Sigmoid colon (tissue), 7 donors: ENCODE measurements at regions of chrX and their contacts with region 1.

Region 1: DNA sequence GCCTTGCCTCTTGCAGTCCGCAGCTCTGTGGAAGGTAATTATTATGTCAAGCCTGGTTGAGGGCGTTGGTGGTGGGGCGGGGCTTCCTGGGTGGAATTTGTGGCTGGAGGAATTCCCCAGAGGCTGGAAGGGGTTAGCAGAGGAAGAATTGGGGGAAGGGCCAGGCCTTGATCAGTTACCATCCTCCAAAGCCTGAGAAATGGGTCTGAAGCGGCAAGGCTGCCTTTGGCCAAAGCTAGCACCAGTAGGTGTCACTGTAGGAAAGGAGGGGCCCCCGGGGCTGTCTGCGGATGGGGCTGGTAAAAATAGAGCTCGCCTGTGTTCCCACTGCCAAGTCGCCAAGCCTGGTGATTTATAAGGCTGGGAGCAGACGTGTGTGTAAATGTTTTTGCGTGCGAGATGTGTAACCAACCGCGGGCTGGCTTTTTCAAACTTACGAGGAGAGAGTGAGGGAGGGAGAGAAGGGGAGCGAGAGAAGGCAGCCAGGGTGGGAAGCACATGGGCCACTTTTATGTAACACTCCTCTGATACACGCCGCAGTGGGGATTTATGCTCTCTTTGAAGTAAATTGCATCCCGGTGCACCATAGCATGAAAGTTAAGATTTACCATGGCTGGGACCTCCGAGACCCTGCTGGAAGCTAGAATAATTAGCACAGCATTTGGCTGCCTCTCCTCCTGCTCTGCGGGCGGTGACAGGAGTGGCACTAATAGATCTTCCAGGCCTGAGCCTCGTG is 366.9 kb downstream of the BCOR start:
- DNase-seq: peak; percentile 94
- H3K4me3 ChIP-seq: no peak overlapping the region
- H3K27ac ChIP-seq: peak overlapping the region in 3 of 4 donors; percentile 63 to 67 (median 65)
- H3K4me1 ChIP-seq: peaks cover 0 to 37% (median 18%) of the 10 kb centered on the region in 4 donors
- H3K27me3 ChIP-seq: no peaks in the 10 kb centered on the region
- CTCF ChIP-seq: peak in 3 of 4 experiments; percentile 4 to 51 (median 21)
- EP300 ChIP-seq: peak; percentile 17 to 65 (median 37)
- POLR2A ChIP-seq: no peak

Region 2: DNA sequence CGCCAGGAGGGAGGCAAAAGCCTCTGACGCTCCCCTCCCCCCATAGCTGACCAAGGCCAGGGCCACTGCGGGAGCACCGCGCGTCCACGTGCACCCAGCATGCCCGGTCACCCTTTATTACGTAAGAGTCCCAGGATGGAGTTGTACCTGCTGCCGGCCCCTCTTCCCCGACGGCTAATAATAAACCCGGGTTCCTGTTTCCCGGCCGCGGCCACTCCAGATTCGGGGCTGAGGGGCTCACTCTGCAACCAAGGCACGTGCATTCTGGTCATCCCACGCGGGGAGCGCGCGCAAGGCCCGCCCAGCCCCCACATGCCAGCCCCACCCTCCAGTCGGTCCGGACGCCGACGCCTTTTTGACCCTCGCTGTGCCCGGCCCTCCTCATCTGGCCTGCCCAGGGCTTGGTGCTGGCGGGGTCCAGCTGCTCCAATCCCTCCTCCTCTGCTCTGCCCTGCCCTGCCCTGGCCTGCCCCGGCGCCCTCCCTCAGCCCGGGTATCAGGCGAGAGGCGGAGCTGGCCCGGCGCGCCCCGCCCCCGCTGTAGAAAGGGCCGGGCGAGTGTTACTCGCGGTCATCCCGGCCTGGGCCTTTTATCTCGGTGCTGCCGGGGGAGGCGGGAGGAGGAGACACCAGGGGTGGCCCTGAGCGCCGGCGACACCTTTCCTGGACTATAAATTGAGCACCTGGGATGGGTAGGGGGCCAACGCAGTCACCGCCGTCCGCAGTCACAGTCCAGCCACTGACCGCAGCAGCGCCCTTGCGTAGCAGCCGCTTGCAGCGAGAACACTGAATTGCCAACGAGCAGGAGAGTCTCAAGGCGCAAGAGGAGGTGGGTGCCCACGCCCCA is 927.0 kb before region 1 on chrX:
- intact Hi-C with region 1: loop called (anchors 10 kb)
- DNase-seq: peak; percentile 92
- H3K4me3 ChIP-seq: peak overlapping the region; percentile 54 to 78 (median 68)
- H3K27ac ChIP-seq: peak overlapping the region; percentile 90 to 95 (median 93)
- H3K4me1 ChIP-seq: peaks cover 0 to 24% (median 17%) of the 10 kb centered on the region in 4 donors
- H3K27me3 ChIP-seq: no peaks in the 10 kb centered on the region
- CTCF ChIP-seq: no peak
- EP300 ChIP-seq: peak in 1 of 4 donors; percentile 42
- POLR2A ChIP-seq: peak; percentile 75 to 85

Region 3: GRCh38 chrX:38939067-38939466 is 791.8 kb before region 1 on chrX:
- intact Hi-C with region 1: no loop called
- DNase-seq: no peak
- H3K4me3 ChIP-seq: no peak overlapping the region
- H3K27ac ChIP-seq: peak overlapping the region in 1 of 4 donors; percentile 58
- H3K4me1 ChIP-seq: peaks cover 0 to 6% (median 0%) of the 10 kb centered on the region in 4 donors
- H3K27me3 ChIP-seq: no peaks in the 10 kb centered on the region
- CTCF ChIP-seq: no peak
- EP300 ChIP-seq: no peak
- POLR2A ChIP-seq: no peak

Region 4: DNA sequence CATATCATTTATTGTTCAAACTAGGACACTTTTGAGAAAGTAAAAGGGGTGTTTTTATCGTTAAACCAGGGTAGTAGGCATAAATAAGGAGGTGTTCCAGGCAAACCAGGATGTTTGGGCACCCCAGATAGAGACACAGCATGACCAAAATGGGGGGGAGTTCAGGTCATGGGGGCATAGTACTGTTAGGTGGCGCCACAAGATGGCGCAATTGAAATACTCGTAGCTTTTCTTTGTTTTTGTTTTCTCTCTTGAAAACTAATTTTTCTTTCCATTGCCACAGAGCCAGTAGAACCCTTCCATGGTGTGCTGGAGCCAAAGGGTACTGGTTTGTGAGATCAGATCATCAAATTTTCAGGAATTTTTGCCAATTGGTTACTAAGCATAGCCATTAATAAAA is 83.6 kb after region 1 on chrX:
- intact Hi-C with region 1: loop called (anchors 10 kb)
- DNase-seq: no peak
- H3K4me3 ChIP-seq: no peak overlapping the region
- H3K27ac ChIP-seq: peak overlapping the region in 2 of 4 donors; percentile 43 to 44
- H3K4me1 ChIP-seq: peaks cover 0 to 6% (median 0%) of the 10 kb centered on the region in 4 donors
- H3K27me3 ChIP-seq: no peaks in the 10 kb centered on the region
- CTCF ChIP-seq: peak in 3 of 4 experiments; percentile 13 to 26 (median 23)
- EP300 ChIP-seq: no peak
- POLR2A ChIP-seq: no peak

Region 5: GRCh38 chrX:40108959-40109287 is 378.1 kb after region 1 on chrX:
- intact Hi-C with region 1: loop called (anchors 10 kb)
- DNase-seq: peak; percentile 93
- H3K4me3 ChIP-seq: peak overlapping the region; percentile 27 to 72 (median 71)
- H3K27ac ChIP-seq: peak overlapping the region; percentile 90 to 98 (median 94)
- H3K4me1 ChIP-seq: peaks cover 0 to 58% (median 27%) of the 10 kb centered on the region in 4 donors
- H3K27me3 ChIP-seq: peaks cover 0 to 21% (median 0%) of the 10 kb centered on the region in 3 donors
- CTCF ChIP-seq: no peak
- EP300 ChIP-seq: no peak
- POLR2A ChIP-seq: no peak

Region 6: DNA sequence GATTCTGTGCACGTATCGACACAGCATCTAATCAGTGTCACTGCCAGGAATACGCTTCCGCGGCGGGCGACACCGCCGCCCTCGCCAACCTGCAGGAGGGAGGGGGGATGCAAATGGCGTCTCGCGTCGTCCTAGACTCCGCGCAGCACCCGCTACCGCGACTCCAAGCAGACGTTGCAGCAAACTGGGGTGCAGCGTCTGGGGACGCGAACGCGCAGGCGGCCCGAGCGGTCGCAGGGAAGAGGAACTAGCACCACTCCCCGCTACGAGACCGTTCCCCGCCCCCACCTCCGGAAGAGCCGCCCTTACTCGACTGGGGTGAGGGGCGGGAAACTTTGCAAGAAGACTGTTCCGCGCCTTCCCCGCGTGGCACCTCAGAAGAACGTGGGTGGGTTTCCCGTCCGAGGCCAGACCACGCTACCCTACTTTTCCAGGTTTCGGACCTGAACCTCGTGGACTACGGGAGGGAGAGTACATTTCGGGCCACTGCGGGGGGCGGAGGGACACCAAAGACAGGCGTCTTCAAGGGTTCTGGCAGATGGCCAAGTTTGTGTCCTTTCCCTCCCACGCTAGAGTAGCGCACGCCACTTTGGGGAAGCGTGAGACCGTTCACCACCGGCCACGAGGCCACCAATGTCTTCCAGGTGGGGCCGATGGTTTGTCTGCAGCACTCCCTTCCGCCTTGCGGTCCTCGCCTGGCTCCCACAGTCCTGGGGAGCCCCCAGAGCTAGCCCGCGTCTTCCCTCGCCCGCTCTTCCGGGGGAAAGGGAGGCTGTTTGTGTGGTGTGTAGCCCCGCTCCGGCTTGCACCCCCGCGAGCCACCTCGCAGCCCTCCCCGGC is 444.9 kb after region 1 on chrX:
- intact Hi-C with region 1: loop called (anchors 5 kb)
- DNase-seq: peak; percentile 89
- H3K4me3 ChIP-seq: peak overlapping the region; percentile 38 to 63 (median 56)
- H3K27ac ChIP-seq: peak overlapping the region; percentile 91 to 97 (median 93)
- H3K4me1 ChIP-seq: peaks cover 0 to 46% (median 26%) of the 10 kb centered on the region in 4 donors
- H3K27me3 ChIP-seq: peaks cover 0 to 5% (median 0%) of the 10 kb centered on the region in 3 donors
- CTCF ChIP-seq: no peak
- EP300 ChIP-seq: no peak
- POLR2A ChIP-seq: no peak